OCI-LY7 (cell line): ENCODE measurements at regions of chr6 and their contacts with region 1.

Region 1: DNA sequence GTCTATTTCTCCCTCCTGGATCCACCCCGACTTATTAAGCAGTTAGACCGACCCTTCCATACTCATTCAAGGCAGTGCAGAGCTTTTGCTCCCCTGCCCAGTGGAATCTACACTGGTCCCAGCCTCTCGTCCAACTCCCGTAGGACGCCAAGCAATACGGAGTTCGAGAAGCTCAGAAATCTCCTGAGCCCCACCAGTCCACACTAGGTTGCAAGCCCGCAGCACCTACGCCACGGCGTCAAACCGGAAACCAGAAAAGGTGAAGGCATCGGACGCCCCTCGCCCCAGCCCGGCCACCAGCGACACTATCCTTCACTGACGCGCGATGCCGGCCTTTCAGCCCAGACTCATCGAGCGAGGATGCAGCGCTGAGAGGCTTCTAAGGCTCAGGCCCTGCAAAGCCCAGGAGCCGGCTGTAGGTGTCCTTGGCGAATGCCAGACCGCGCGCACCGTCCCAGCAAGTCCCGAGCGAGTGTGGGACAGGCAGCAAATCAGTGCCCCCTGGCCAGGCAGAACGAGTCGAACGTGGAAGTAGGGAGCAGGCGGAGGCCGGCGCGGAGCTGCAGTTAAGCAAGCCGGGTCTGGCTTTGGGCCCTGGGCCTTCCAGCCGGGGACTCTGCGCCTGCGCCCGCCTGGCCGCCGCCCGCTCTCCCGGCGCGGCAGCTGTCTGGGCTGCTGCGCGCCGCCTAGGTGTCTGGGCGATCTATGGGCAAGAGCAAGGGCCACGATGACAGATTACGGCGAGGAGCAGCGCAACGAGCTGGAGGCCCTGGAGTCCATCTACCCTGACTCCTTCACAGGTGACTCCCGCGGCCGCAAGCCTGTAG is at the start of gene RWDD1:
- DNase-seq: peak; percentile 99
- H3K4me3 ChIP-seq: peak within 1 kb of the TSS; percentile 91
- H3K27ac ChIP-seq: peak within 1 kb of the TSS; percentile 81
- H3K4me1 ChIP-seq: peaks cover 36% of the 10 kb centered on the region
- CTCF ChIP-seq: no peak; the same call in 1 of the 2 replicates
- total RNA-seq, gene RWDD1: 23.0 and 33.4 TPM in 2 replicates

Region 2: GRCh38 chr6:116010790-116011401 is 560.2 kb before region 1 on chr6:
- CTCF ChIA-PET with region 1: no interaction called
- POLR2A ChIA-PET with region 1: no interaction called
- intact Hi-C with region 1: loop called (anchors 10 kb)
- DNase-seq: peak; percentile 67
- H3K4me3 ChIP-seq: no peak overlapping the region
- H3K27ac ChIP-seq: no peak overlapping the region
- H3K4me1 ChIP-seq: peaks cover 8% of the 10 kb centered on the region
- CTCF ChIP-seq: peak; percentile 93

Region 3: DNA sequence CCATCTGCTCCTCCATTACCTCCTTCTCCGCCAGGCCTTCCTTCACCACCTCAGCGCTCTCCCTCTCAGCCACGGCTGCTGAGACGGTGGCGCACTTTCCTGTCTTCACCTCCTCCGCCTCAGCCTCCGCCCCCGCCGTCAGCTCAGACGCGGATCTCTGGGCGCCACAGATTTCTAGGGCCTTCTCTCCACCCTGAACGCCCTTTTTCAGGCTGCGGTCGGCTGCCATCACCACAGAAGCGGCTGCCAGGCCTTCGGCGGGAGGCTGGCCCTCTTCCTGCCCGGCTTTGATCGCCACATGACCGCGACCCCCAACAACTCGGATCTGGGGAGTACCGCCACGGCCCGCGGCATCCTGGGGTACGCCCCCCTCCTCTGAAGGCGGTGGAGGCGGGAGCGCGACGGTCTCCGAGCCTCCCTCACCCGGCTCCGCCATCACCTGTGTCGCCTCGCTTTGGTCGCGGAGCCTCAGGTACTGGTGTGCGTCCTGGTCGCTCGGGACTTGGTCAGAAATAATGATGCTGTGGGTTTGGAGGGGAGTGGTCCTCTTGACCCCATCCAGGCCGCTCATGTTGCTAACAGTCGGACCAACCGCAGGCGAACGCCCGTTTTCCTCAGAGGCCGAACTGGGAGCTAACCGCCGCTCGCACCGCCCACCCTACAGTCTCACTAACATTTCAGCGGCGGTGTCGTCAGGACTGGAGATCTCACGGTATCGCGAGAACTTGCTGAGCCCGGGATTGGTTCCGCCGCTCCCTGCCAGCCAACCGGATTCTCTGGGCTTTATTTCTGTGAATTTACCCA is 291.6 kb before region 1 on chr6 and contains the start of gene TSPYL1:
- CTCF ChIA-PET with region 1: interaction called, 3 read pairs
- POLR2A ChIA-PET with region 1: interaction called, 16 read pairs
- intact Hi-C with region 1: loop called (anchors 2 kb)
- DNase-seq: peak; percentile 97
- H3K4me3 ChIP-seq: peak within 1 kb of the TSS; percentile 86
- H3K27ac ChIP-seq: peak within 1 kb of the TSS; percentile 78
- H3K4me1 ChIP-seq: peaks cover 68% of the 10 kb centered on the region
- CTCF ChIP-seq: peak; percentile 43
- total RNA-seq, gene TSPYL1: 32.8 and 33.3 TPM in 2 replicates

Region 4: GRCh38 chr6:116648156-116648555 is 77.1 kb after region 1 on chr6:
- CTCF ChIA-PET with region 1: no interaction called
- POLR2A ChIA-PET with region 1: interaction called, 3 read pairs
- intact Hi-C with region 1: loop called (anchors 5 kb)
- DNase-seq: no peak
- H3K4me3 ChIP-seq: no peak overlapping the region
- H3K27ac ChIP-seq: no peak overlapping the region
- H3K4me1 ChIP-seq: no peaks in the 10 kb centered on the region
- CTCF ChIP-seq: no peak

Region 5: DNA sequence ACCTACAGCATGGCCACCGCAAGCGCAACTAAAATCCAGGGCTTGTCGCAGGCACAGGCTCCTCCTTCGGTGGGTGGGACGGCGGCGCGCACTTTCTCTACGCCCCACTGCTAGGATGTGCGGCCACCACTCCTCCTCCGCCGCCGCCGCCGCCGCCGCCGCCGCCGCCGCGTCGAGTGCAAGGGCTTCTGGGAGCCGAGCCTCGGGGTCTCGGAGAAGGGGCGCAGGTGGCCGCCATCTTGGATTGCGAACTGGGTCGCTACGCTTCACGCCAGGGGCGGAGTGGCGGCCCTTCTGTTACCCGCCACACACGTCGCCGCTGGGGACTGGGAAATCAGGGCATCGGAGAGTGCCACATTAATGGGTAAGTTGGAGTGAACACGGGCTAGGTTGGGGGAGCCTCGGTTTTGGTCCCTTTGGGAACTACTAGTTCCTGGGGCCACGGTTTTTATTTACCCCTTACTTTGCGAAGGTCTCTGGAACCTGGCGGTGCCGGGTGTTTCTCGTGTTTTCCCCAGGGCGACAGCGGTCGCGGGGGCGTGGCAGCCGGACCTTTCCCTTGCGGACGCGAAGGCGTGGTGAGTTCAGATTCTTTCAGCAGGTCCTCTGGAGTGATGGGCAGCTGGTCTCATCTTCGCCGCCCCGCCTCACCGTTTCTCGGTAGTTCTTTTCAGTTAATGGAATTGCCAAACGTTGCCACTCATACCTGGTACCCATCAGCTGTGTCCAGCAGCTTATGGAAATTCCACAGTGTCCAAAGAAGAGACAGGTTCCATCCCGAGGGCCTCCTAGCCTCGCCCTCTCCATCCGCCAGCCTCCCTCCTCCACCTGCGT is 110.1 kb after region 1 on chr6 and contains the start of gene KPNA5:
- CTCF ChIA-PET with region 1: no interaction called
- POLR2A ChIA-PET with region 1: interaction called, 8 read pairs
- intact Hi-C with region 1: loop called (anchors 1 kb)
- DNase-seq: peak; percentile 92
- H3K4me3 ChIP-seq: peak within 1 kb of the TSS; percentile 82
- H3K27ac ChIP-seq: peak within 1 kb of the TSS; percentile 66
- H3K4me1 ChIP-seq: peaks cover 19% of the 10 kb centered on the region
- CTCF ChIP-seq: no peak
- total RNA-seq, gene KPNA5: 10.3 and 12.4 TPM in 2 replicates